ENCODE measurements at regions of chr2 and their contacts with region 1.

Region 1: DNA sequence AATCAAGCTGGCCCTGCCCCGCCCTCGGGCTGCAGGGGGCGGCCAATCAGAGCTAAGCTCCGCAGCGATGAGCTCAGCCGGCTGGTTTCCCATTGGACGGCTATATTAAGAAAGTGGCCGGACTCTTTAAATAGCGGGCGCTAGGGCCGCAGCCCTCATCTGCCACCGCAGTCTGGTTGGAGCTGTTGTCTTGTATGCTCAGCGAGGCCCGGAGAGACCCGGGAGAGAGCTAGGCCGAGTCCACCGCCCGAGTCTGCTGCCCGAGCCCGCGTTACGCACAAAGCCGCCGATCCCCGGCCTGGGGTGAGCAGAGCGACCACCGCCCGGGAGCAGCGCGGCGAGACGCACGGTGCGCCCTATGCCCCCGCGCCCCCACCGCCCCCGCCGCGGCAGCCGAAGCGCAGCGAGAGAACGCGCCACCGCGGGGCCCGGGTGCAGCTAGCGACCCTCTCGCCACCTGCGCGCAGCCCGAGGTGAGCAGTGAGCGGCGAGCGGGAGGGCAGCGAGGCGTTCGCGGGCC is at the start of gene RHOB:
- DNase-seq: peak; percentile 85 to 92 (median 87)
- H3K4me3 ChIP-seq: peak within 1 kb of the TSS; percentile 71
- H3K4me3 Mint-ChIP-seq: peak within 1 kb of the TSS; percentile 82 to 93 (median 85)
- H3K27ac ChIP-seq: peak within 1 kb of the TSS; percentile 65
- H3K27ac Mint-ChIP-seq: peak within 1 kb of the TSS in 7 of 8 donors; percentile 53 to 88 (median 68)
- H3K4me1 ChIP-seq: peaks cover 12% of the 10 kb centered on the region
- H3K4me1 Mint-ChIP-seq: peaks cover 5 to 24% (median 7%) of the 10 kb centered on the region in 3 donors
- H3K27me3 ChIP-seq: peaks cover 4% of the 10 kb centered on the region
- H3K27me3 Mint-ChIP-seq: peaks cover 21 to 31% of the 10 kb centered on the region in 2 donors
- total RNA-seq, gene RHOB: 27.4 TPM

Region 2: GRCh38 chr2:20350753-20351554 is 96.0 kb before region 1 on chr2 and contains the start of gene PUM2:
- CTCF ChIA-PET with region 1: interaction called, 3 read pairs
- POLR2A ChIA-PET with region 1: interaction called, 20 read pairs
- DNase-seq: peak; percentile 91 to 98 (median 97)
- H3K4me3 ChIP-seq: peak within 1 kb of the TSS; percentile 88
- H3K4me3 Mint-ChIP-seq: peak within 1 kb of the TSS in 3 of 7 donors; percentile 92 to 94 (median 94)
- H3K27ac ChIP-seq: peak within 1 kb of the TSS; percentile 89
- H3K27ac Mint-ChIP-seq: peak within 1 kb of the TSS in 7 of 8 donors; percentile 27 to 95 (median 88)
- H3K4me1 ChIP-seq: peaks cover 50% of the 10 kb centered on the region
- H3K4me1 Mint-ChIP-seq: peaks cover 37 to 39% (median 39%) of the 10 kb centered on the region in 3 donors
- H3K27me3 ChIP-seq: no peaks in the 10 kb centered on the region
- H3K27me3 Mint-ChIP-seq: no peaks in the 10 kb centered on the region
- total RNA-seq, gene PUM2: 120 to 121 TPM

Region 3: DNA sequence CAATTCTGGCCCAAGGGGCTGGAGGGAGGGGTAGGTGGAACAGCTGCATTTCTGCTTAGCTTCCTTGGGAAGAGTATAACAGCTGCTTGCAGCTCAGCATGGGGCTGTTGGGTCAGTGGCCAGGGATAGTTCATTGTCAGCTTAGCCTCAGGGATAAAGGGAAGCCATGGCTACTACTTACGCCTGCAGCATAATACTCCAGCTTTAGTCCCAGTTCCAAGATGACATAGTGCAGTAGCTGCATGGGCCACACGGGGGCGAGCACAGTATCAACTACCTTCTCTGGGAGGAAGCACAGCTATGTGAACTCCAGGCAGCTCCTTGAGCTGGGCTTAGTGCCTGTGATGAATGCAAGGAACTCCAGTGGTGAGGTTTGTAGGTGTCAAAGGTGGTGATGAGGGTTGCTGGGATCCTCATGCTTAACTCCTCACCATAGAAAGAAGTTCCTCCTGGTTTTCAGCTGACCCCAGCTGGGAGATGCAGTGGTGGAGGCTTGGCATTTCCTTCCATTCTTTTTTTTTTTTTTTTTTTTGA is 35.5 kb before region 1 on chr2:
- CTCF ChIA-PET with region 1: interaction called, 12 read pairs
- POLR2A ChIA-PET with region 1: interaction called, 6 read pairs
- DNase-seq: peak; percentile 46 to 76 (median 55)
- H3K4me3 ChIP-seq: no peak overlapping the region
- H3K4me3 Mint-ChIP-seq: no peak overlapping the region
- H3K27ac ChIP-seq: no peak overlapping the region
- H3K27ac Mint-ChIP-seq: no peak overlapping the region
- H3K4me1 ChIP-seq: no peaks in the 10 kb centered on the region
- H3K4me1 Mint-ChIP-seq: peaks cover 0 to 2% (median 0%) of the 10 kb centered on the region in 3 donors
- H3K27me3 ChIP-seq: no peaks in the 10 kb centered on the region
- H3K27me3 Mint-ChIP-seq: peaks cover 11 to 12% of the 10 kb centered on the region in 2 donors

Region 4: DNA sequence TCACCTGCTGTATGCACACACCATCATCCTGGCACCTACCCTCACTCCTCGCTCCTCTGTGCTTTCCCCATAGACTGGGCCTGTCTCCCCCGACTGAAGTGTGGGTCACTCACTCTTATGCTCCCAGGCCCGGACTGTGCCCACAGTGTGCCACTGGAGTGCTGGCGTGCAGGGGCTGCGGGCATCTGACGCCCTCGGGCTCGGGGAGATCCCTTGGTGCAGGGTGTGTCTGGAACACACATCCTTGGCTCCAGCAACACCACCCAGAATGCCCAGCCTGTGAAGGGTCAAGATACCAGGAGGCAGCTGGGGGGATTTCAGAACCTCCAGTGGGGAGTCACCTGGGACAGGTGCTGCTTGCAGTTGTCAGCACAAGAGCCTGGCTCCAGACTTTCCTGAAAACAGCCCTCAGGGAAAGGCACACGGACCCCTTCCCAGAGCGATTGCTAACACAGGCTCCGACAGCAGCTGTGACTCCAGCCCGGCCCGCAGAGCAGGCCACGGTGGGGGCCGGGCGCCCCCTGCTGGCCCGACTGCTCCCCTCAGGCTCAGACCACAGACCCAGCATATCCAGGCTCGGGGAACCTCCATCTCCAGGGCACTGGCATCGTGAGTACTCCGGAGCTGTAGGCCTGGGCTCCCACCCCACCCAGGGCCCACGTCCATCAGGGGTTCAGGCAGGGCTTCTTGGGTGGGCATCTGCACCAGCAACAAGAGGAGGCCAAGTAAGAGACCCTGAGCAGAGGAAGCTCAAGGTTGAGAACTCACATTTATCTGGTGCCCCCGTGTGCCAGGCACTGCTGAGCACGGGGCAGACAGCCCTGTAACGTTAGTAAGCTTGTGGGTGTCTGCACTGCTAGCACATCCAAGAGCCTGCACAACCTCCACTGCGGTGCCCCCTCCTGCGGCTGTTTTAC is 195.3 kb after region 1 on chr2:
- CTCF ChIA-PET with region 1: interaction called, 87 read pairs
- POLR2A ChIA-PET with region 1: interaction called, 6 read pairs
- DNase-seq: peak; percentile 62 to 80 (median 65)
- H3K4me3 ChIP-seq: no peak overlapping the region
- H3K4me3 Mint-ChIP-seq: no peak overlapping the region
- H3K27ac ChIP-seq: no peak overlapping the region
- H3K27ac Mint-ChIP-seq: peak overlapping the region in 3 of 8 donors; percentile 47 to 63 (median 63)
- H3K4me1 ChIP-seq: peaks cover 8% of the 10 kb centered on the region
- H3K4me1 Mint-ChIP-seq: peaks cover 0 to 11% (median 6%) of the 10 kb centered on the region in 3 donors
- H3K27me3 ChIP-seq: no peaks in the 10 kb centered on the region
- H3K27me3 Mint-ChIP-seq: no peaks in the 10 kb centered on the region

Region 5: DNA sequence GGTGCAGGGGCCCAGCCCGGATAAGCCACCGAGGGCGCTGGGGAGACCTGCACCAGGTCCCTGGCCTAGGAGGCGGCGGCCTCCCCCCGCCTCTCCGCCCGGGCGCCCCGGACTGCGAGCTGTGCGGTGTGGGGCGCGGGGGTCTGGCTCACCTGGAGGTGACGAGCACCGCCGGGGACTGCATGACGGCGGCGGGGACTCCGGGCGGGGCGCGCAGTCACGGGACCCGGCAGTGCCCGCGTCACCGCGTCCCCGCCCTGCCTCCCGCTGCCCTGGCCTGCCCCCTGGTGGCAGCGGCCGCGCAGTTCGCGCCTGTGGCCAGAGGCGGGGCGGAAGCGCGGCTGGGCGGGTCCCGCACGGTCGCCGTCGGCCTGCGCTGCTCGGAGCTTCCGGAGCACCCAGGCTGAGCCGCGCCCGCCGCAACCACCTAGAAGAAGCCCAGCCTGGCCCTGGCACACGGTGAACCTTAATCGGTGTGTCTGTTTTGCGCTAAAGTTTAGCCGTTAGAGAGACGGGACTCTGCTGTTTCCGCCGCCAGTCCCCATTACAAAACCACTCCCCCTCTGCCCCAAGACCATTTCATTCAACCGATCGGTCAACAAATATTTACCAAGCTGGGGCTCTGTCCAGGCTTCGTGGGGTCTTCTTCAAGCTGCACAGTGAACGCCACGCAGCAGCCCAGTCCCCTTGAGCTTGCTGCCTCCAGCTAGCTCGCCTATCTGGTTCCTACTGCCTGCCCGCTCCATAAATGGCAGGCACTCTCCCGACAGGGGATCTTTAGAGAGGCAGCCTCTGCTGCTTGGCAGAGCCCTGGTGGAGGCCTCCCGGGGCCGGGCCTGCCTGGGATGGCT is 204.1 kb after region 1 on chr2 and contains the start of gene HS1BP3:
- CTCF ChIA-PET with region 1: interaction called, 58 read pairs
- POLR2A ChIA-PET with region 1: interaction called, 43 read pairs
- DNase-seq: peak; percentile 87 to 96 (median 91)
- H3K4me3 ChIP-seq: peak within 1 kb of the TSS; percentile 96
- H3K4me3 Mint-ChIP-seq: peak within 1 kb of the TSS; percentile 85 to 92 (median 88)
- H3K27ac ChIP-seq: peak within 1 kb of the TSS; percentile 95
- H3K27ac Mint-ChIP-seq: peak within 1 kb of the TSS; percentile 87 to 98 (median 97)
- H3K4me1 ChIP-seq: peaks cover 19% of the 10 kb centered on the region
- H3K4me1 Mint-ChIP-seq: peaks cover 30 to 44% (median 38%) of the 10 kb centered on the region in 3 donors
- H3K27me3 ChIP-seq: no peaks in the 10 kb centered on the region
- H3K27me3 Mint-ChIP-seq: peaks cover 0 to 4% of the 10 kb centered on the region in 2 donors
- total RNA-seq, gene HS1BP3: 9.3 to 9.5 TPM

Region 6: DNA sequence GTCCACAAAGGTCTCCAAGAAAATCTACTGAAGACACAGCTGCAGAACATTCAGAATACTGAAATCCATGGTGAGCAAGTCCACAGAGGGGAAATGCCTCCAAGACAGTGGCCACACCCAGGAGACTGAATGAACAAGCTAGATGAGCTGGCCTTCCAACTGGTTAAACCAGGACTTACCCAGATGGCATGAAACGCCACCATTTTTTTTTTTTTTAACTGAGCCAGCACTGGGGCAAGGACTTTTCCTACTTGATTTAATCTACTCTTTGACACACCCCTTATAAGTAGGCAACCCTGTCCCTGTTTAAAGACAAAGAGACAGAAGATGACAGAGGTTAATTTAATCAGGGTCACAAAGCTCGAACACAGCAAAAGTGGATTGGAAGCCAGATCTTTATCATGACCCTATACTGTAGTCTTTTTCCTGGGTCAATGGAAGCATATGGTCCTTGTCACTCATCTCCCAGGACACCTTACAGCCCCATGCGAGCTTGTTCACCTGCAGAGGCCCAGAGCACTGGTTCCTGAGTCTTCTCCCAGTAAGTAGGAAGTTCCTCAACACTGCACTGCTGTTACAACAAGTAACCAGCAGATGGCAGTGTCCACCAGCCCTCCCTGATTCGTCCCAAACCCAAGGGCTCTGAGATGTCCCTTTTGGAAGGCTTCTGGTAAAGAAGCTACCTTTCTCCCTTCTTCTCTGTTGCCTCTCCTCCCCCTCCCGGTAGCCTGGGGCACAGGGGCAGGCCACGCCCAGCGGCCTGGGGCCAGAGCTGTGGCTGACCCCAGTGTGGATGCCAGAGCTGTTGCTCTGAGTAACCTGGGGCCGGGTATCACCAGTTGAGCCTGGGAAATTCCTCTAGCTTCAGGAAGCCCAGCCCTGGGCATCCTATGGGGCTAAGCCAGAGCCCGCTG is 214.3 kb after region 1 on chr2:
- CTCF ChIA-PET with region 1: interaction called, 11 read pairs
- POLR2A ChIA-PET with region 1: interaction called, 3 read pairs
- DNase-seq: peak; percentile 35 to 77 (median 58)
- H3K4me3 ChIP-seq: no peak overlapping the region
- H3K4me3 Mint-ChIP-seq: no peak overlapping the region
- H3K27ac ChIP-seq: no peak overlapping the region
- H3K27ac Mint-ChIP-seq: peak overlapping the region in 1 of 8 donors; percentile 23
- H3K4me1 ChIP-seq: peaks cover 4% of the 10 kb centered on the region
- H3K4me1 Mint-ChIP-seq: peaks cover 4 to 16% (median 7%) of the 10 kb centered on the region in 3 donors
- H3K27me3 ChIP-seq: peaks cover 42% of the 10 kb centered on the region
- H3K27me3 Mint-ChIP-seq: peaks cover 39 to 81% of the 10 kb centered on the region in 2 donors

Region 7: DNA sequence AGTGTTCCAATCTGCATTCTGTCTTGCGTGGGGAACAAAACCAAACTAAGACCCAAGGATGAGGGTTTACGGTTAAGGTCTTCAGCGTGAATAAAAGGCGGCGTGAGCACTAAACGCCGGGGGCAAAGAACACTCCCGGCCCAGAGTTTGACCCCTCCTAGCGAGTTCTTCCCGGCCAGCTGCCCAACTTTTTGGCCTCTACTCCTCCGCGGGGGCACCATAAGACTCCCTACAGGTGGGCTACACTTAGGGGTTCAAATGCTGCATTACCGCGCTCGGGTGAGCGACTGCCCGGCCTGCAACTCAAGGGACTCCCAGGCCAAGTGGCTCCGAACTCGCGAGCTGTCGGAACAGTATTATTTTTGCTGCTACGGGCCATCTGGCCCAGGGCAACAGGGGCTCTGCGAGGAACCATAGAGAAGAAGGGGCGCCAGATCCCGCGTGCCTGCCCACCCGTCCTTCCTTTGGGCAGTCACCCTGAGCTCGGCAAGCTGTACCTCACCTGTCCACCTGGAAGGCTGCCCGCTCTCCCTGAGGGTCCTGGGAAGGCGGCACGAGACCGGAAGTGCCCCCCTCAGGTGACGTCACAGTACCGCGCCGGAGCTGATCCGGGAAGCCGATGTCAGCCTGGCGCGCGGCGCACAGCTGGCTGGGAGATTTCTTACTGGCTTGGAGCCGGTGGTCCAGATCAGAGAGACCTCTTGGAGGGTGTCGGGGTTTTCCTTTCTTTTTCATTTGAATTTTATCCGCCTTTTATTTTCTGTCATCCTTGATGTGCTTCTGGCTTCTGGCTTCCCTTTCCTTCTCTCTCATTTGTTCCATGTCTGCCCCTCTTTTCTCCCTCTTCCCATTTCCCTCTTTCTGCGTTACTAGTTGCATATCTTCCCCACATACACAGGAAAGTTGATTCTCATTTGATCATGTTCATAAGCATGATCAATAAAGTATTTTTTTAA is 375.8 kb after region 1 on chr2 and contains the start of gene LDAH:
- CTCF ChIA-PET with region 1: no interaction called
- POLR2A ChIA-PET with region 1: interaction called, 11 read pairs
- DNase-seq: peak; percentile 78 to 90 (median 82)
- H3K4me3 ChIP-seq: peak within 1 kb of the TSS; percentile 86
- H3K4me3 Mint-ChIP-seq: peak within 1 kb of the TSS; percentile 91 to 99 (median 96)
- H3K27ac ChIP-seq: peak within 1 kb of the TSS; percentile 95
- H3K27ac Mint-ChIP-seq: peak within 1 kb of the TSS; percentile 94 to 99 (median 98)
- H3K4me1 ChIP-seq: peaks cover 10% of the 10 kb centered on the region
- H3K4me1 Mint-ChIP-seq: peaks cover 32 to 39% (median 35%) of the 10 kb centered on the region in 3 donors
- H3K27me3 ChIP-seq: no peaks in the 10 kb centered on the region
- H3K27me3 Mint-ChIP-seq: peaks cover 0 to 6% of the 10 kb centered on the region in 2 donors
- total RNA-seq, gene LDAH: 31.6 to 32.1 TPM